Activated CD8-positive, alpha-beta T cell treated with anti-CD3 and anti-CD28 coated beads for 36 hours (primary cell): ENCODE measurements at regions of chrX and their contacts with region 1.

Region 1: GRCh38 chrX:136880452-136881013 is at the start of gene RBMX:
- DNase-seq: peak; percentile 94
- ATAC-seq: peak; percentile 91
- H3K4me3 Mint-ChIP-seq: peak within 1 kb of the TSS; percentile 99
- H3K27ac Mint-ChIP-seq: peak within 1 kb of the TSS; percentile 100
- H3K4me1 Mint-ChIP-seq: peaks cover 21% of the 10 kb centered on the region
- H3K27me3 Mint-ChIP-seq: no peaks in the 10 kb centered on the region
- CTCF ChIP-seq: no peak
- total RNA-seq, gene RBMX: 285 TPM

Region 2: DNA sequence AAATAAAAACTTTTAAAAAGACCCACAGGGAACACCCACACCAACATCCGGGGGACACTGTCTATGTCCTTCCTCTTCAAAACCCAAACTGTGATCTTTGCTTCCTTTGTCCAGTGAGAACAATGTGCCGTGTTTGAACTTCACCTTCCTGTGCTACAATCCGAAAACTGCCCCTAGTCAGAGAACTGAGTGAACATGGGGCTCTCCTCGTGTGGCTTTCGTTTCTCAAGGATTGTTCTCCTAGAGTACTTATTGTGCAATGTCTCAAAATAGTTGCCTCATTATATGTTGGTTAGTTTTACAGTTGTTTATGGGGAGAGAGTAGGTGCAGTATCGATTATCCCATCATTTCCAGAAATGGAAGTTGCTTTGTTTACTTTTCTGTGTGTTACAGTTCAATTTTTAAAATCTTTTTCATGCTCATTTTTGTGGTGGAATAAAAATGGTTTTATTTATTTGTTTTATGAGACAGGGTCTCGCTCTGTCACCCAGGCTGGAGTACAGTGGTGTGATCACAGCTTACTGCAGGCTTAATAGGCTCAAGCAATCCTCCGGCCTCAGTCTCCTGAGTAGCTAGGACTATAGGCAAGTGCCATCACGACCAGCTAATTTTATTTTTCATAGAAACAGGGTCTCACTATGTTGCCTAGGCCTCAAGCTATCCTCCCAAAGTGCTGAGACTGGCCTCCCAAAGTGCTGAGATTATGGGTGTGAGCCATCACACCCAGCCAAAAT is 29.9 kb before region 1 on chrX:
- CTCF ChIA-PET with region 1: no interaction called
- POLR2A ChIA-PET with region 1: no interaction called
- intact Hi-C with region 1: no loop called
- DNase-seq: no peak
- ATAC-seq: no peak
- H3K4me3 Mint-ChIP-seq: no peak overlapping the region
- H3K27ac Mint-ChIP-seq: no peak overlapping the region
- H3K4me1 Mint-ChIP-seq: peaks cover 12% of the 10 kb centered on the region
- H3K27me3 Mint-ChIP-seq: no peaks in the 10 kb centered on the region
- CTCF ChIP-seq: no peak

Region 3: DNA sequence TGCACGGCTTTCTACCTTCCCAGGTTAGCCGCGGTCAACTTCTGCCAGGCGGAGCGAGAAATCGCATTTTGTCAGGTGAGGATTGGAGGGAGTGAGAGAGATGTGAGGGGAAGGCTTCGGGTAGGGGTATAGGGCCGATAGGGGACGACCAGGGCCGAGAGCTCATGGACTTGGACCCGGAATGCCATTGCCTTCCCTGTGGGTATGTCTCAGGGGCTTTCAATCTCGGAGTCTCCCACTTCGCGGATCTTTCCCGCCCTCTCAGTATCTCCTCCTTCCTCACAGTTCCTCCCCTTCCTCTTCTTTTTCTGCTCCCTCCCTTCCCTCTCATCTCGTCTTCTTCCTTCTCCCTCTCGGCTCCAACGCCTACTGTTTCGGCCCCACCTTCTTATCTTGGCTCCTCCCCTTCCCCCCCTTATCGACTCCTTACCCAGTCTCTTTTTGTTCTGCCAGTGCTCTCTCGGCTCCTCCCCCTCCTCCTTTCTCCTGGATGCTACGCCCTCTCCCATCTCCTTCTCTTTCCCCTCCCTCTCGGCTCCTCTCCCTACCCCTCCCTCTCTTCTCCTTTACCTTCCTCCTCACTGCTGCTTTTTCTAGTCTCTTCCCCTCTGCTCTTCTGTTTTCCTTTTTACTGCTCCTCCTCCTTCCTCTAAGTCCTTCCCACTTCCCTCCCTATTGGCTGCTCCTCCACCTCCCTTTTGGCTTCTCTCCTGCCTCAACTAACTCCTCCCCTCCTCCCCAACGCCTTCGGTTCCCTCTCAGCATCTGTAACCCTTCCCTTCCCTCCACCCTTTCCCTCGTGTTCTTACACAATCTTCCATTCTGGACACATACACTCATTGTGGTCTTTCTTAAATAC is 29.4 kb after region 1 on chrX:
- CTCF ChIA-PET with region 1: interaction called, 3 read pairs
- POLR2A ChIA-PET with region 1: interaction called, 16 read pairs
- intact Hi-C with region 1: no loop called
- DNase-seq: peak; percentile 77
- ATAC-seq: peak; percentile 77
- H3K4me3 Mint-ChIP-seq: peak overlapping the region; percentile 94
- H3K27ac Mint-ChIP-seq: peak overlapping the region; percentile 85
- H3K4me1 Mint-ChIP-seq: peaks cover 16% of the 10 kb centered on the region
- H3K27me3 Mint-ChIP-seq: no peaks in the 10 kb centered on the region
- CTCF ChIP-seq: no peak